OCI-LY7 (cell line): ENCODE measurements at regions of chr4 and their contacts with region 1.

Region 1: GRCh38 chr4:81471588-81472288 is at the start of gene RASGEF1B:
- DNase-seq: peak; percentile 91
- H3K4me3 ChIP-seq: peak within 1 kb of the TSS; percentile 84
- H3K27ac ChIP-seq: peak within 1 kb of the TSS; percentile 86
- H3K4me1 ChIP-seq: peaks cover 36% of the 10 kb centered on the region
- CTCF ChIP-seq: no peak
- total RNA-seq, gene RASGEF1B: 10.6 and 12.6 TPM in 2 replicates

Region 2: DNA sequence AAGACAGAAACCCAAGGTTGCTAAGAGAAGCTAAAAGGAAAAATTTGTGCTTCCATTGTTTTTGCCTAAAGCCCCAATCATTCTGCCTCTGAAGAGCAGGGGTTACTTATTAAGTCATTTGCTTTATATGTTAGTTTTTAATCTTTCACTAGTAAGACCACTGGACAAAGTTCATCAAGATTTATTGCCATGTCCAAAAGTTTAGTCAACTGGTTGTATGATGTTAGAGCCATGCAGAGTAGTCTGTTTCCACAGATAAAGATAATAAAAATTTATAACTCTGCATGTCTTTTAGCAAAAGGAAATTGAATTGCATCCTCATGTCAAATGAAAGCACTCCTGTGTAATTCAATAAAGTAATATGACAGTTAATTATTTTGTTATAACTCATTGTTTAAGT is 180.9 kb before region 1 on chr4:
- CTCF ChIA-PET with region 1: no interaction called
- POLR2A ChIA-PET with region 1: no interaction called
- intact Hi-C with region 1: no loop called
- DNase-seq: no peak
- H3K4me3 ChIP-seq: no peak overlapping the region
- H3K27ac ChIP-seq: no peak overlapping the region
- H3K4me1 ChIP-seq: no peaks in the 10 kb centered on the region
- CTCF ChIP-seq: no peak

Region 3: GRCh38 chr4:81405894-81406401 is 65.8 kb before region 1 on chr4:
- CTCF ChIA-PET with region 1: no interaction called
- POLR2A ChIA-PET with region 1: no interaction called
- intact Hi-C with region 1: loop called (anchors 1 kb)
- DNase-seq: peak; percentile 85
- H3K4me3 ChIP-seq: no peak overlapping the region
- H3K27ac ChIP-seq: no peak overlapping the region
- H3K4me1 ChIP-seq: no peaks in the 10 kb centered on the region
- CTCF ChIP-seq: peak; percentile 100

Region 4: DNA sequence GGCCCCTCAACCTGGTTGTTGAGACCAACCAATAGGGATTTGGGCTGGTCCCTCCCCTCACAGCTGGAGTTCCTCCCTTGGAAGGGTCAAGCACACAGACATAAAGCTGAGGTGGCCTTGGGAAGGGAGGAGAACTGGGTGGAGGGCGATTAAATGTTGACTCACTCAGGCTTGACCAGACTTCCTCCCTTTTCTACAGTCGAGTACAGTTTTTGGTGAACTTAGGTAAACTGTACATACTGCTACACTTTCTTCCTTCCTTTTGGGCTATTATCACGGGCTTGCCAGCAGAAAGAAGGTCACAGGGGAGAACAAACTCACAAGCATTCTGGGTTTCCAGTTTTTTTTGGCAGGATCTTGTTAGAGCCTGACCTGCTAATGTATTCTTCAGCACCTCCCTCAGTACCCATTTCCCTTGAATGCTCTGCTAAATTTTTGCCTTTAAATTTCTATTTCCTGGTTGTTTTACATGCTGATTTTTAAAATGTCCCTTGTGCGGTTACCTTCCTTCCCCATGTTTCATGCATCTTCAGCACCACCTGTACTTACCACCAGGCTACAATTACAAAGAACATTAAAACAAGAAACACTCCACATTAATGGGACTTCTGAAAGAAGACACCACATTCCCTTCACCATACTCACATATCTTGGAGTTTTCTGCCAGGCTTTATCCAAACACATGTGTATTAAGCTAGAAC is 135.2 kb after region 1 on chr4:
- CTCF ChIA-PET with region 1: interaction called, 3 read pairs
- POLR2A ChIA-PET with region 1: no interaction called
- intact Hi-C with region 1: loop called (anchors 1 kb)
- DNase-seq: peak; percentile 66
- H3K4me3 ChIP-seq: peak overlapping the region; percentile 37
- H3K27ac ChIP-seq: peak overlapping the region; percentile 76
- H3K4me1 ChIP-seq: peaks cover 59% of the 10 kb centered on the region
- CTCF ChIP-seq: peak; percentile 40; the same call in 1 of the 2 replicates

Region 5: DNA sequence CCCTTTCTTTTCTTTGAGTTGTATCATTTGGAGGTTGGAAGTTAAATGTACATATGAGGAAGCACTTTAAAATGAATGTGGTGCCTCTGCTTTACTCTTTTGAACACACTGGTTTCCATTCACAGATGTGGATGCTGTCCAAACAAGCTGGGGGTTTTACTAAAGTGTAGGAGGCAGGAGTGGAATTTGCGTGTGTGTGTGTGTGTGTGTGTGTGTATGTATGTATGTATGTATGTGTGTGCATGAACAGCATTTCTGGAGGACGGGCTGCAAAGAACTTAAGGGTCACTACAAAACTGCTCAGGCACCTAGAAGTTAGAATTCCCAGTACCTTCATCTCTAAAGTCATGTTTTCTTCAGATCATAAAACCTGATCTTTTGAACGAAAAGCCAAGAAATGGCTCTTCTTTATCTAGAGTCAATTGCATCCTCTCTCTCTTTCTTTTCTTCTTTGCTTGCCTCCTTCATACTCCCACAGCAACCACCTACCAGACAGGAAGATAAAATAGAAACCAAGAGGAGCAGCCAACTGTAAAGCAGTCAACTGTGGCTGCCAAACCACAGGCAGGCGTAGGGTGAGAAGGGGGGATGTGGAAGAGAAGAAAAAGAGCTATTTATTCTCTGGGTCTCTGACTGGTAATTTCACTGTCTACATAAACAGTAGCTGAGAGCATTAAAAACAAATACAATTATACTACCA is 177.0 kb after region 1 on chr4:
- CTCF ChIA-PET with region 1: no interaction called
- POLR2A ChIA-PET with region 1: interaction called, 9 read pairs
- intact Hi-C with region 1: loop called (anchors 2 kb)
- DNase-seq: peak; percentile 88
- H3K4me3 ChIP-seq: peak overlapping the region; percentile 52
- H3K27ac ChIP-seq: peak overlapping the region; percentile 90
- H3K4me1 ChIP-seq: peaks cover 65% of the 10 kb centered on the region
- CTCF ChIP-seq: no peak

Region 6: DNA sequence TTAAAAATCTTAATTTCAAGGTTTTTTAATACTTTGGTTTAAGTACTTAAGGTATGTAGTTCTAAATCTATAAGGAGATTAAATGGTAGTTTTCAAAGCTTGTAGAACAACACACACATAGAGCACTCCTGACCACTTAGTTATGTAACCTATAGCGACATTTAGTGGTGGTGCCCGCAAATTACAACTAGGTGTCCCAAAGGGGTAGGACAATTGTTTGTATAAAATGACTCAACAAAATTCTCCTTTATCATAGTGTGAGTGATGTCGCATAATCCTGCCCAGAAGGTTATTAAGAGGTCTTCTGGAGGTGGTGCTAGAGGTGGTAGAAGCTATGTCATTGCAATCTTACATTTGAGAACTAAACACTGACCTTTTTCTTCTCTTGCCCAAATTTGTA is 373.0 kb after region 1 on chr4:
- CTCF ChIA-PET with region 1: interaction called, 16 read pairs
- POLR2A ChIA-PET with region 1: interaction called, 5 read pairs
- intact Hi-C with region 1: loop called (anchors 1 kb)
- DNase-seq: peak; percentile 86
- H3K4me3 ChIP-seq: no peak overlapping the region
- H3K27ac ChIP-seq: no peak overlapping the region
- H3K4me1 ChIP-seq: peaks cover 4% of the 10 kb centered on the region
- CTCF ChIP-seq: peak; percentile 96